IMR-90 (cell line): ENCODE measurements at regions of chr14 and their contacts with region 1.

Region 1: GRCh38 chr14:85764822-85765221 is 234.9 kb downstream of the FLRT2 start:
- DNase-seq: no peak
- ATAC-seq: no peak
- H3K4me3 ChIP-seq: no peak overlapping the region
- H3K27ac ChIP-seq: no peak overlapping the region
- H3K4me1 ChIP-seq: no peaks in the 10 kb centered on the region
- H3K27me3 ChIP-seq: no peaks in the 10 kb centered on the region
- CTCF ChIP-seq: no peak
- POLR2A ChIP-seq: no peak
- RAD21 ChIP-seq: no peak

Region 2: GRCh38 chr14:85387181-85387580 is 377.6 kb before region 1 on chr14:
- CTCF ChIA-PET with region 1: no interaction called
- POLR2A ChIA-PET with region 1: no interaction called
- dilution Hi-C with region 1: no loop called
- in situ Hi-C with region 1: no loop called
- intact Hi-C with region 1: no loop called
- DNase-seq: no peak
- ATAC-seq: no peak
- H3K4me3 ChIP-seq: no peak overlapping the region
- H3K27ac ChIP-seq: no peak overlapping the region
- H3K4me1 ChIP-seq: no peaks in the 10 kb centered on the region
- H3K27me3 ChIP-seq: no peaks in the 10 kb centered on the region
- CTCF ChIP-seq: no peak
- POLR2A ChIP-seq: no peak
- RAD21 ChIP-seq: no peak

Region 3: GRCh38 chr14:85663248-85663647 is 101.6 kb before region 1 on chr14:
- CTCF ChIA-PET with region 1: no interaction called
- POLR2A ChIA-PET with region 1: no interaction called
- dilution Hi-C with region 1: no loop called
- in situ Hi-C with region 1: no loop called
- intact Hi-C with region 1: no loop called
- DNase-seq: no peak
- ATAC-seq: peak; percentile 40
- H3K4me3 ChIP-seq: no peak overlapping the region
- H3K27ac ChIP-seq: no peak overlapping the region
- H3K4me1 ChIP-seq: no peaks in the 10 kb centered on the region
- H3K27me3 ChIP-seq: no peaks in the 10 kb centered on the region; the same call in 1 of the 2 replicates
- CTCF ChIP-seq: no peak
- POLR2A ChIP-seq: no peak
- RAD21 ChIP-seq: no peak

Region 4: DNA sequence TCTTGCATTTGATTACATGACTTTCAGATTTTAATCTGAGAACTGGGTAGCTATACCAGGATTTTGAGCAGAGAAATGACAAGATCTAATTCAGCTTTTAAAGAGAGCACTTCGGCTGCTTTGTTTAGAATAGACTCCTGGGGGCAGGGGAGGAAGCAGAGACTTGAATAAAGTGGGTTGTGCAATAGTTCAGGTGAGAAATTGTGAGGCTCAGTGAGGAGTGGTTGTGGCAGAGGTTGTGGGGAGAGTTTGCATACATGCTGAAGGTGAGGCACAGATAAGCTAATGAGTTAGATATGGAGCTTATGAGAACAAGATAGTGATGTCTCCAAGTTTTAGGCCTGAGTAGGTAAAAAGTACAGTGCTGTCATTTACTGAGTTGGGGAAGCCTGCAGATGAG is 46.5 kb after region 1 on chr14:
- CTCF ChIA-PET with region 1: no interaction called
- POLR2A ChIA-PET with region 1: no interaction called
- dilution Hi-C with region 1: no loop called
- in situ Hi-C with region 1: no loop called
- intact Hi-C with region 1: loop called (anchors 1 kb)
- DNase-seq: no peak
- ATAC-seq: no peak
- H3K4me3 ChIP-seq: no peak overlapping the region
- H3K27ac ChIP-seq: no peak overlapping the region
- H3K4me1 ChIP-seq: no peaks in the 10 kb centered on the region
- H3K27me3 ChIP-seq: no peaks in the 10 kb centered on the region
- CTCF ChIP-seq: no peak
- POLR2A ChIP-seq: no peak
- RAD21 ChIP-seq: no peak